ENCODE measurements at regions of chr1 and their contacts with region 1.

Region 1: GRCh38 chr1:23718482-23718881 is 24.8 kb upstream of the ELOA start:
- DNase-seq: no peak
- ATAC-seq: no peak
- H3K4me3 ChIP-seq: 0 out of 2 replicates have a peak overlapping the region, but pooled peaks have one; percentile 10
- H3K27ac ChIP-seq: peak overlapping the region; percentile 99
- H3K4me1 ChIP-seq: peaks cover 42% of the 10 kb centered on the region
- H3K27me3 ChIP-seq: no peaks in the 10 kb centered on the region
- CTCF ChIP-seq: peak; percentile 38 to 67 (median 54)
- EP300 ChIP-seq: no peak
- POLR2A ChIP-seq: no peak
- RAD21 ChIP-seq: no peak

Region 2: GRCh38 chr1:23691499-23692307 is 26.8 kb before region 1 on chr1 and contains the start of gene RPL11:
- CTCF ChIA-PET with region 1: interaction called, 9 read pairs
- POLR2A ChIA-PET with region 1: interaction called, 5 read pairs
- RAD21 ChIA-PET with region 1: interaction called, 13 read pairs
- SMC1A ChIA-PET with region 1: interaction called, 46 read pairs
- in situ Hi-C with region 1: no loop called
- intact Hi-C with region 1: loop called (anchors 1 kb)
- DNase-seq: peak; percentile 84
- ATAC-seq: peak; percentile 94
- H3K4me3 ChIP-seq: peak within 1 kb of the TSS; percentile 87
- H3K27ac ChIP-seq: peak within 1 kb of the TSS; percentile 95
- H3K4me1 ChIP-seq: peaks cover 8% of the 10 kb centered on the region
- H3K27me3 ChIP-seq: no peaks in the 10 kb centered on the region
- CTCF ChIP-seq: peak; percentile 81 to 85 (median 84)
- EP300 ChIP-seq: 0 out of 4 replicates have a peak, but pooled peaks of 1 of the 2 experiments have one; percentile 17
- POLR2A ChIP-seq: peak; percentile 98
- RAD21 ChIP-seq: peak; percentile 56
- polyA plus RNA-seq, gene RPL11: 2,510 to 2,532 TPM

Region 3: GRCh38 chr1:23699280-23700179 is 19.0 kb before region 1 on chr1:
- CTCF ChIA-PET with region 1: interaction called, 4 read pairs
- POLR2A ChIA-PET with region 1: interaction called, 16 read pairs
- RAD21 ChIA-PET with region 1: interaction called, 7 read pairs
- SMC1A ChIA-PET with region 1: interaction called, 46 read pairs
- in situ Hi-C with region 1: no loop called
- intact Hi-C with region 1: loop called (anchors 1 kb)
- DNase-seq: no peak
- ATAC-seq: peak; percentile 82
- H3K4me3 ChIP-seq: no peak overlapping the region
- H3K27ac ChIP-seq: no peak overlapping the region
- H3K4me1 ChIP-seq: peaks cover 7% of the 10 kb centered on the region
- H3K27me3 ChIP-seq: no peaks in the 10 kb centered on the region
- CTCF ChIP-seq: no peak
- EP300 ChIP-seq: no peak
- POLR2A ChIP-seq: no peak
- RAD21 ChIP-seq: no peak

Region 4: DNA sequence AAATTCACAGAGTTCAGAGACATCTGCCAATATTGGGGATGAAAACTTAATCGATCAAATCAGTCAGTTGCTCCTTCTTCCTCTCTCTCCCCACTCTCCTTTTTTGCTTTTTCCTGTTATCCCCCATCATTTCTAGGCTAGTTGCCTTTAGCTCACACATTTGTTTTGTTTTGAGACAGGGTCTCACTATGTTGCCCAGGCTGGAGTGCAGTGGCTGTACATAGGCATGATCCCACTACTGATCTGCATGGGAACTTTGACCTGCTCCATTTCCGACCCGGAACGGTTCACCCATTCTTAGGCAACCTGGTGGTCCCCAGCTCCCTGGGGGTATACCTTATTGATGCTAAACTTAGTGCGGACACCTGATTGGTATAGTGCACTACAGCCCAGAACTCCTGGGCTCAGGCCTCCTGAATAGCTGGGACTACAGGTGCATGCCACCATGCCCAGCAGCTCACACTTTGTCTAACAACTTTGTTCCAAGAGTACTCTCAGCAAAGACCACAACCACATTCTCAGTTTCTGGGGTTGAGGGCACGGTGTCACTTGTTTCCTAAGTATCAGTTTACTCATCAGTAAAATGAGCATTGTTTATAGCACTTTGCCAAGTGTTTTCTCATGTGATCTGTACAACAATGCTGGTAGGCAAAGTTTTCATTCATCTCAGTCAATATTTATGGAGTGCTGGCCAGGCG is 18.1 kb after region 1 on chr1:
- CTCF ChIA-PET with region 1: interaction called, 4 read pairs
- POLR2A ChIA-PET with region 1: interaction called, 16 read pairs
- RAD21 ChIA-PET with region 1: interaction called, 51 read pairs
- SMC1A ChIA-PET with region 1: interaction called, 4 read pairs
- in situ Hi-C with region 1: no loop called
- intact Hi-C with region 1: no loop called
- DNase-seq: no peak
- ATAC-seq: peak; percentile 78
- H3K4me3 ChIP-seq: no peak overlapping the region
- H3K27ac ChIP-seq: no peak overlapping the region
- H3K4me1 ChIP-seq: peaks cover 36% of the 10 kb centered on the region
- H3K27me3 ChIP-seq: no peaks in the 10 kb centered on the region
- CTCF ChIP-seq: no peak
- EP300 ChIP-seq: no peak
- POLR2A ChIP-seq: no peak
- RAD21 ChIP-seq: no peak

Region 5: GRCh38 chr1:23743287-23744052 is 25.0 kb after region 1 on chr1 and contains the start of gene ELOA:
- CTCF ChIA-PET with region 1: interaction called, 27 read pairs
- POLR2A ChIA-PET with region 1: interaction called, 29 read pairs
- RAD21 ChIA-PET with region 1: interaction called, 51 read pairs
- SMC1A ChIA-PET with region 1: interaction called, 13 read pairs
- in situ Hi-C with region 1: no loop called
- intact Hi-C with region 1: loop called (anchors 2 kb)
- DNase-seq: no peak
- ATAC-seq: peak; percentile 92
- H3K4me3 ChIP-seq: peak within 1 kb of the TSS; percentile 84
- H3K27ac ChIP-seq: peak within 1 kb of the TSS; percentile 73
- H3K4me1 ChIP-seq: peaks cover 12% of the 10 kb centered on the region
- H3K27me3 ChIP-seq: no peaks in the 10 kb centered on the region
- CTCF ChIP-seq: no peak
- EP300 ChIP-seq: no peak
- POLR2A ChIP-seq: peak; percentile 99
- RAD21 ChIP-seq: no peak
- polyA plus RNA-seq, gene ELOA: 20.1 to 24.8 TPM

Region 6: GRCh38 chr1:23751050-23751814 is 32.8 kb after region 1 on chr1:
- CTCF ChIA-PET with region 1: interaction called, 27 read pairs
- POLR2A ChIA-PET with region 1: interaction called, 29 read pairs
- RAD21 ChIA-PET with region 1: interaction called, 51 read pairs
- SMC1A ChIA-PET with region 1: interaction called, 5 read pairs
- in situ Hi-C with region 1: no loop called
- intact Hi-C with region 1: no loop called
- DNase-seq: no peak
- ATAC-seq: peak; percentile 97
- H3K4me3 ChIP-seq: no peak overlapping the region
- H3K27ac ChIP-seq: no peak overlapping the region
- H3K4me1 ChIP-seq: no peaks in the 10 kb centered on the region
- H3K27me3 ChIP-seq: no peaks in the 10 kb centered on the region
- CTCF ChIP-seq: peak; percentile 79 to 86 (median 84)
- EP300 ChIP-seq: no peak
- POLR2A ChIP-seq: no peak
- RAD21 ChIP-seq: peak; percentile 93